Activated naive CD4-positive, alpha-beta T cell treated with anti-CD3 and anti-CD28 coated beads for 36 hours (primary cell): ENCODE measurements at regions of chr21 and their contacts with region 1.

Region 1: DNA sequence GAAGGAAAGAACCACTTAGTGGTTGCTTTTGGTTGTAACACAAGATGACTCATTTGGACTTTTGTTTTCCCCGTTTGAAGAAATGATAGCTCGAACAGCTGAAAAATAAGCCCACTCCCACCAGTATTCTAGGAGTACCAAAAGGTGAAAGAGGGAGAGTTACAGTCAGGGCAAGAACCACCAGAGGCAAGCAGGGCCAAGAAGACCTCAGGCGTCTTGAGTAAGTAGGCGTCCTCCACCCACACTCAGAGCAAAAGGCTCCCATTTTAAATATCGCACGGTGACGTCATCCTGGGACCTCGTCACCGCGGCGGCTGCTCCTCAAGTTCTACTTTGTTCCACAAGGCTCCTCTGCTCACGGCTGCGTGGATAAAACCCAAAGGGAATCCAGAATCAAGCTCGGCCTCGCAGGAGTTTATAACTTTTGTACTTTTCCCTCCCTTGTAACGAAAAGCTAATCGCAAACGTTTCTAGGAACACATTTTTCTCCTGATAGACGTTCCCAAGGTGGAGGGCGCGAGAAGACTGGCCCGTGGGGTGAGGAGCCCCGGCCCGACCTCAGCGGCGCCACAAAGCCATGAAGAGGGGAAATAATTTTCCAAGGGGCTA is 1.2 kb downstream of the BTG3 start:
- DNase-seq: peak; percentile 88
- H3K4me3 Mint-ChIP-seq: peak overlapping the region; percentile 83
- H3K27ac Mint-ChIP-seq: peak overlapping the region; percentile 91
- H3K4me1 Mint-ChIP-seq: peaks cover 31% of the 10 kb centered on the region
- H3K27me3 Mint-ChIP-seq: no peaks in the 10 kb centered on the region

Region 2: GRCh38 chr21:17542371-17543011 is 69.0 kb before region 1 on chr21:
- CTCF ChIA-PET with region 1: no interaction called
- intact Hi-C with region 1: no loop called
- DNase-seq: no peak
- H3K4me3 Mint-ChIP-seq: no peak overlapping the region
- H3K27ac Mint-ChIP-seq: no peak overlapping the region
- H3K4me1 Mint-ChIP-seq: no peaks in the 10 kb centered on the region
- H3K27me3 Mint-ChIP-seq: peaks cover 3% of the 10 kb centered on the region

Region 3: GRCh38 chr21:17708522-17709265 is 97.2 kb after region 1 on chr21:
- CTCF ChIA-PET with region 1: no interaction called
- intact Hi-C with region 1: loop called (anchors 2 kb)
- DNase-seq: no peak
- H3K4me3 Mint-ChIP-seq: no peak overlapping the region
- H3K27ac Mint-ChIP-seq: peak overlapping the region; percentile 59
- H3K4me1 Mint-ChIP-seq: peaks cover 16% of the 10 kb centered on the region
- H3K27me3 Mint-ChIP-seq: no peaks in the 10 kb centered on the region